Activated T-helper 1 cell treated with anti-CD3 and anti-CD28 coated beads, Interleukin-12 subunit alpha, Interleukin-12 subunit beta, Interleukin-2, Interleukin-4 antibody, amounts not matched to agents 30 ng/mL and 10 ng/mL and 1 ng/mL, durations not matched to agents 14 hours and 24 hours and 36 hours (primary cell): ENCODE measurements at regions of chr11 and their contacts with region 1.

Region 1: DNA sequence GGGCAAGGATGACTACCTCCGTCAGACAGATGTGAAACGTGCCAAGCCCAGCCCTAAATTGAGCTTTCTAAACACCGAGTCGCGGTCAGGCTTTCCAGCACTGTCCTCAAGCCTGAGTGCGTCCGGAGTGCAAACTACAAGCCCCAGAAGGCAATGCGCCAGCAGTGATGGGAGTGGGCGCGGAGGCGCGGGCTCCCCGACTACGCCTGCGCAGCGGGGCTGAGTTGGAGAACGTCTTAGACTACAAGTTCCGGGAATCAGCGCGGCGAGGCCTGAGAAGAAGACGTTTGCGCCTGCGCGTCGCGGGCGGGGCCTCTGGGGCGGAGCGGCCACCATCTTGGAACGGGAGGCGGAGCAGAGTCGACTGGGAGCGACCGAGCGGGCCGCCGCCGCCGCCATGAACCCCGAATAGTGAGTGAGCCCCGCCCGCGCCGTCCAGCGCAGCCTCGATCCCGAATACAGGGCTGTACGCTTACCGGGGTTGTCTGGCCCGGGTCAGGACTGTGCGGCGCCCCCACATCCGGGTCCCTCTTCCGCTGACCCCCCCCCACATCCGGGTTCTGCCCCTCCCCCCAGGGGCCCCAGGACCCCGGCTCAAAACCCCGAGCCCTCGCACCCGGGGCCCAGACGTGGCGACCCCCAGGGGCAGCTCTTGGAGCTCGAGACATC is at the start of gene RAB1B:
- DNase-seq: peak; percentile 100
- H3K4me3 Mint-ChIP-seq: peak within 1 kb of the TSS; percentile 90
- H3K27ac Mint-ChIP-seq: peak within 1 kb of the TSS; percentile 90
- H3K4me1 Mint-ChIP-seq: peaks cover 35% of the 10 kb centered on the region
- H3K27me3 Mint-ChIP-seq: peaks cover 2% of the 10 kb centered on the region
- total RNA-seq, gene RAB1B: 123 and 124 TPM in 2 replicates

Region 2: DNA sequence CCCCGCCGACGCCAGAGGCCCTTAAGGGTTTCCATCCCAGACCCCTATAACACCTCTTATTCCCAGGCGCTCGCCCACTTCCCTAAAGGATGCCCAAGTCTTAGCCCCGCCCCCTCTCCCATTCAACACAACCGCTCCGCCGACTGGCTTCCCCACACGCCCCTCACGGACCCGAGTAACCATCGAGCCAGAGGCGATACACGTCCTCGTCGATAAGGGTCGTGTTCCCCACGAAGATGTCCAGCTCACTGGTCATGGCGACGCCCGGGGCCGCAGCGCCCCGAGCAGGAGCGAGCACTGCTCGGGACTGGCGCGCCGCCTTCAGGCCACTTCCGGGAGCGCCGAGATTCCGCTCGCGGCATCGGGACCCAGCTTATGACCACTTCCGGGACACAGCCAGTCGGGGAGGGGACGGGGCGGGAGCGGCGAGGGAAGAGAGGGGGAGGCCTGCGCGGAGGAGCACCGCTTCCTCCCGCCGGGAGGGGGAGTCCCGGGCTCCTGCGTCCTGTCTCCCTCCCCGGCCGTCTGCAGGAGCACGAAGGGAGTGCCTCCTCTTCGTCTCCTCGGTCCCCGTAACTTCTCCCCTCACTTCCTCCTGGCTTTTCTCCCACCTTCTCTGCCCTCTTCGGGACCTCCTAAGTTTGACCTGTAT is 380.1 kb before region 1 on chr11 and contains the start of gene FIBP:
- intact Hi-C with region 1: loop called (anchors 5 kb)
- DNase-seq: peak; percentile 90
- H3K4me3 Mint-ChIP-seq: peak within 1 kb of the TSS; percentile 99
- H3K27ac Mint-ChIP-seq: peak within 1 kb of the TSS; percentile 96
- H3K4me1 Mint-ChIP-seq: peaks cover 58% of the 10 kb centered on the region
- H3K27me3 Mint-ChIP-seq: no peaks in the 10 kb centered on the region
- total RNA-seq, gene FIBP: 86.8 and 93.2 TPM in 2 replicates

Region 3: GRCh38 chr11:66051766-66052663 is 216.4 kb before region 1 on chr11 and contains the start of gene SF3B2:
- intact Hi-C with region 1: loop called (anchors 1 kb)
- DNase-seq: peak; percentile 97
- H3K4me3 Mint-ChIP-seq: peak within 1 kb of the TSS; percentile 100
- H3K27ac Mint-ChIP-seq: peak within 1 kb of the TSS; percentile 97
- H3K4me1 Mint-ChIP-seq: peaks cover 33% of the 10 kb centered on the region
- H3K27me3 Mint-ChIP-seq: peaks cover 4% of the 10 kb centered on the region
- total RNA-seq, gene SF3B2: 267 TPM in 2 replicates

Region 4: GRCh38 chr11:66081505-66081904 is 186.9 kb before region 1 on chr11:
- intact Hi-C with region 1: no loop called
- DNase-seq: peak; percentile 70
- H3K4me3 Mint-ChIP-seq: peak overlapping the region; percentile 89
- H3K27ac Mint-ChIP-seq: peak overlapping the region; percentile 93
- H3K4me1 Mint-ChIP-seq: peaks cover 64% of the 10 kb centered on the region
- H3K27me3 Mint-ChIP-seq: no peaks in the 10 kb centered on the region

Region 5: DNA sequence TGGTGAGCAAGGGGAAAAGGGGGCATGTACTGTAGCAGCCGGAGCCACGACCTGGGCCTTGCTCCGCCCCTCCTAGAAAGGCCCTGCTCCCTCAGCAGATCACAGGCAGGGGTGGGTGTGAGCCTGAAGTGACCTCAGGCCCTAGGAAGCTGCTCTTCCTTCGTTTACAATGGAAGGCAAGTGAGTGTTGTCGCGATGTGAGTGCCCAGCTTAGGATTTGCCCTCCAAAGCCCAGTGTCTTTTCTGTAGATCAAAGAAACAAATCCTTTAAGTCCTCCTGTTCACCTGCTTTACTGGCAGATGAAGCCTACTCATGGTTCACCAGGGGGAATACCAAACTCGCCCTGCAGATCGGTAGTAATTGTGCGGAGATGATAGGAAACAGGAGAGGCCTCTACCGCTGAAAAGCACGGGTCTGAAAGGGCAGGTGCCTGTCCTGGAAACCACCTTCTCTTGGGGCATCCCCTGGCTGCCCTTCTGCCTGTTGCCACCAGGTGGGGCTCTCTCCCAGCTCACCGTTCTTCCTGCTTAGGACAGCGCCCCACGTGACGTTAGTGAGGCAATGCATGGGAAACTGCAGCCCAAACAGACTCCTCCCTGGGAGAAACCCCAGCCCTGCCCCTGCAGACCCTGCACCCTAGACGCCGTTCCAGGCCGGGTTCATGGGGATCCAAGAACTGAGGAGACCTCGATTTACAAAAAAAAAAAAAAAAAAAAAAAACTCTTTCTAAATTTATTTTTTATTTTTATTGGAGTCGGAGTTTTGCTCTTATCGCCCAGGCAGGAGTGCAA is 45.9 kb before region 1 on chr11:
- intact Hi-C with region 1: loop called (anchors 1 kb)
- DNase-seq: peak; percentile 92
- H3K4me3 Mint-ChIP-seq: peak overlapping the region; percentile 20
- H3K27ac Mint-ChIP-seq: peak overlapping the region; percentile 97
- H3K4me1 Mint-ChIP-seq: peaks cover 20% of the 10 kb centered on the region
- H3K27me3 Mint-ChIP-seq: no peaks in the 10 kb centered on the region

Region 6: GRCh38 chr11:66288671-66289547 is 20.5 kb after region 1 on chr11 and contains the start of gene YIF1A:
- intact Hi-C with region 1: loop called (anchors 1 kb)
- DNase-seq: peak; percentile 99
- H3K4me3 Mint-ChIP-seq: peak within 1 kb of the TSS; percentile 95
- H3K27ac Mint-ChIP-seq: peak within 1 kb of the TSS; percentile 99
- H3K4me1 Mint-ChIP-seq: peaks cover 39% of the 10 kb centered on the region
- H3K27me3 Mint-ChIP-seq: peaks cover 28% of the 10 kb centered on the region
- total RNA-seq, gene YIF1A: 125 and 127 TPM in 2 replicates

Region 7: DNA sequence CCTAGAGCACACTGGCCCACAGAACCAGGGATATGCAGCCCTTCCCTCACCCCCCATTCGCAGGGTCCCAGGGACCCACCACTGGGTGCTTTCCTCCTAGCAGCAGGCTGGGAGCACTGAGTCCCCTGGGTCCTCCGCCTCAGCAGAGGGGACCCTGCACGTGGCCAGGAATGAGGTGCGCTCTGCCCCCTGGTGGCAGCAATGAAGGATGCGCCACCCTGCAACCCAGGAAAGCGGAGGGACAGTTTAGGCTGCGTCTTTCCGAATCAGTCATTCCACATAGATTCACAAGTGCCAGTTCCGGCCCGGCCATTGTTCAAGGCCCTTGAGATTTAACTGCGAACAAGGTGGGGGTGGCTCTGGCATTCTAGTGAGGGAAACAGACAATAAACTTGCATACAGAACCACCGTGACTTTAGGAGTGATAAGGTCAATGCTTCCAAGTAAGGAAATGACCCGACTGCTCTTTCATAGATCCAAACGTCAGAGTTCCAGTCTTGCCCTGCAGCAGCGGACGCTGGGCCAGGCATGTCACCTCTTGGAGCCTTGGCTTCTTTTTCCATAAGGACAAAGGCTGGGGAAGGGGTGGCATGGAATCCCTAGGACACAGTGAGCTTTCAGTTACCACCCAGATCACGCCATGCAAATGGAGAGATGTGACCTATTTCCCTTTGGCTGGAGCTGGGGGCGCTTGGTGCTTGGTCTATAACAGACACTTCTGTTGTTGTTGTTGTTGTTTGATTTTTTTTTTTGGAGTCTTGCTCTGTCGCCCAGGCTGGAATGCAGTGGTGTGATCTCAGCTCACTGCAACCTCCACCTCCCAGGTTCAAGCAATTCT is 60.1 kb after region 1 on chr11:
- intact Hi-C with region 1: no loop called
- DNase-seq: peak; percentile 73
- H3K4me3 Mint-ChIP-seq: peak overlapping the region; percentile 59
- H3K27ac Mint-ChIP-seq: peak overlapping the region; percentile 61
- H3K4me1 Mint-ChIP-seq: peaks cover 25% of the 10 kb centered on the region
- H3K27me3 Mint-ChIP-seq: no peaks in the 10 kb centered on the region

Region 8: GRCh38 chr11:66344550-66345315 is 76.3 kb after region 1 on chr11 and contains the start of gene BRMS1:
- intact Hi-C with region 1: loop called (anchors 5 kb)
- DNase-seq: peak; percentile 94
- H3K4me3 Mint-ChIP-seq: peak within 1 kb of the TSS; percentile 97
- H3K27ac Mint-ChIP-seq: peak within 1 kb of the TSS; percentile 95
- H3K4me1 Mint-ChIP-seq: peaks cover 46% of the 10 kb centered on the region
- H3K27me3 Mint-ChIP-seq: peaks cover 2% of the 10 kb centered on the region
- total RNA-seq, gene BRMS1: 63.1 and 67.1 TPM in 2 replicates